Right ventricle myocardium inferior (tissue), 1 donor: ENCODE measurements at regions of chr6 and their contacts with region 1.

Region 1: DNA sequence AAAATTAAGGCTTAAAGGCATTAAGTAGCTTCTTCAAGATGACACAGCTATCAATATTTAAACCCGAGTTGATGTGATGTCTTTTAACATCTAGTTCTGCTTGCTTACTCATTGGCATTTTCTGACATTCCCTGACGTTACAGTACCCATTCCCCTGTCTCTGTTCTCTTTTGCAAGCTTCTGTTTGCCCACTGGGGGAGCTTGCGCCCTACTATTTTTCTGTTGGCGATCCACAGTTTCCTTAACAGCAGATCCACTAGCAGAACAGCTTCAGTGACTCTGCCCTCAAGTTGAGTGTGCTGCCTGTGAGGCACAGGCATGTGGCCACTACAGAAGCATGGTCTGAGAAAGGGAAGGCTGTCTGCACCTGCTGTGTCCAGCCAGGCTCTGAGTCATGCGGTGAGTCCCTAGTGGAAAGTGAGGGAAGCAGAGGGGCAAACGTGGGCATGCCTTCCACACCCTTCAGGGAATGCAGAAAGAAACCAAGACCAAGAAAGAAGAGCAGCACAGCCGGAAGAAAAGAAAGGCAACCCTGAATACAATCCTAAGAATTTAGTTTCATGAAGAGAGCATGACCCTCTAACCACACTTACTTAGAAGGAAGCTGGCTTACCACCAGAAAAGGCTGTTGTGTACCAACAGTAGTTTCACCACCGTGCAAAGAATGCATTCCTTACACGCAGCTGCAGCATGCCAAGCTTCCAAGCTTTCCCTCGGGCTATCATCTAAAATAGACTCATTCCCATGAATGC is 97.7 kb upstream of the VGLL2 start:
- DNase-seq: no peak
- ATAC-seq: no peak

Region 2: DNA sequence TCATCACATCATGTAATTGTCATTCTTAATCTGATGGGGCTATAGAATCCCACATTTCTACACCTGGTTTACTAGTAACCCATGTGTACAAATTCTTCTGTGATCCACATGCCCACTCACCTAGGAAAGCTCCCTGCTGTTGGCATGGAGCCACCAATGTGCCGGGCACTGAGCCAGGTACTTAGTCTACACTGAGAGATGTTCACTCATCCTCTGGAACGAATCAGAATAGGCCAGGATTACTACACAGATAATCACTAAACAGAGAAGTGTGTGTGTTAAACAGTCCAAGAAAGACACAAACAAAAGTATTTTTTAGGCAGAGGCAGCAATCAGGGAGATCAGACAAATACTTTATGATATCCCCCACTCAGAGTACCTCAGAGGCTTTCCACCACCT is 95.6 kb before region 1 on chr6:
- intact Hi-C with region 1: loop called (anchors 10 kb)
- DNase-seq: no peak
- ATAC-seq: no peak

Region 3: DNA sequence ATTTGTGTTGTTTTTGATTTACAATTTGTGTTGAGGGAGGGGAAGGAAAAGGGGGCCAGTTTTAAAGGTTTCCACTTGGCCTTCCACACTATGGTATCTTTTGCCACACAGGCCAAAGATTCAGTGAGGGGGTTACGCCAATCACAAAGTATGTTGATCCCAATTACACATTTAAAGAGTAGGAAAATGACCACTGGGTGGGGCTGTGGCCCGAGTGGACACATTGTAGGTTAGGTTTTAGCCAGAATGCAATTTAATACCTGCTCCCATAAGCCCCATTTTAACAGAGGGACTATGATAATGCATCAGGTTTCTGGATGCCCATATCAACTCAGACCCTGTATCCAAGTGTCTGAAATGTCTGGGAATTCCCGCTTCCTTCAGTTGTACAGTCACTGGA is 113.2 kb after region 1 on chr6:
- intact Hi-C with region 1: no loop called
- DNase-seq: no peak
- ATAC-seq: no peak